Lower lobe of right lung (tissue), 2 donors: ENCODE measurements at regions of chr6 and their contacts with region 1.

Region 1: GRCh38 chr6:165732696-165733488 is 69.9 kb upstream of the PDE10A start:
- DNase-seq: no peak
- ATAC-seq: no peak
- H3K4me3 ChIP-seq: no peak overlapping the region
- H3K27ac ChIP-seq: no peak overlapping the region
- H3K4me1 ChIP-seq: no peaks in the 10 kb centered on the region
- H3K27me3 ChIP-seq: no peaks in the 10 kb centered on the region
- CTCF ChIP-seq: no peak

Region 2: DNA sequence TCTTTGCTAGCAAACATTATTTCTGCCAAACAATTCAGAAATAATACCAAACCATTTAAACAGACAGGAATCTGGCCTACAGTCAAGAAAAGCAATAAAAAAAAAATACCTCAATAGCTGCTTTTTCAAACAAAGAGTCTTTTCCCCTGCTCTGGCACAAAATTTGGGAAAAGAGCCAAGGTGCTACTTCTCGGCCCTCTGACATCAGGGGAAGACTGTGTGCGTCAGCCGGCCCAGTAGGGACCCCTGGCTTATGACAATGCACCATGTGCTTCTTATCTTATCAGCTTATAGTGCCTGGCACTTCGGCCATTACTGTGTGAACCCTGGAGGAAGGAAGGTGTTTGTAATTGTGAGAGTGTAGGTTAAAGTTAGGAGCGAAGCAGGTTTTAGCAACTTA is 159.2 kb before region 1 on chr6:
- intact Hi-C with region 1: no loop called
- DNase-seq: no peak
- ATAC-seq: peak; percentile 63 to 83
- H3K4me3 ChIP-seq: no peak overlapping the region
- H3K27ac ChIP-seq: no peak overlapping the region
- H3K4me1 ChIP-seq: no peaks in the 10 kb centered on the region
- H3K27me3 ChIP-seq: no peaks in the 10 kb centered on the region
- CTCF ChIP-seq: no peak

Region 3: GRCh38 chr6:165849534-165850430 is 116.9 kb after region 1 on chr6:
- intact Hi-C with region 1: loop called (anchors 10 kb)
- DNase-seq: no peak
- ATAC-seq: peak in 1 of 2 donors; percentile 63
- H3K4me3 ChIP-seq: no peak overlapping the region
- H3K27ac ChIP-seq: no peak overlapping the region
- H3K4me1 ChIP-seq: peaks cover 5% of the 10 kb centered on the region
- H3K27me3 ChIP-seq: peaks cover 50% of the 10 kb centered on the region
- CTCF ChIP-seq: no peak

Region 4: DNA sequence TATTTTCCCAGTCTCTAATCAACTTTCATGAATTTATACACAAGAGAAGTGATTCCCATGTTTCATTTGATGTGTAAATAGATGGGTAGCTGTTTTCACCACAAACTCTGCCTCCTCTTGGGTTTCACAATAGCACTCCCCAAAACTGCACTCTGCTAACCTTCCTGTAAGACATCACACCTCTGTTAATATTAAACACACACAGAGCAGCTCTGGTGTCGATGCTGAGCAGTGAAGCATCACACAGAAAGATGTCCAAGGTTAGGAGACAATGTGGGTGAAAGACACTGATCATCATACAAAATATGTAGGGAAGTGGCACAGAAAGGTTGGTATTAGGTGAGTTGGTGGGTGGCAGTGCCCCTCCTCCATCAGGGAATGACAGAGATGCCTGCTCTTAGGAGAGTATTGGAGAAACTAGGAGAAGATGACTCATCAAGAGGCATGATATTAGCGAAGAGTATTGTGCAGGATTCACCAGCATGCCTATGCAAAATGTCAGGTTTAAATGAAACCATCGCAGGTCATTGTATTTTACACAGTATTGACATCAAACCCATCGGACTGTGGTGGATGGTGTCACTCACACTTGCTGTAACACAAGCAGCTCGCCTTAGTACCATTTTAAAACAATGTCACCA is 235.0 kb after region 1 on chr6:
- intact Hi-C with region 1: no loop called
- DNase-seq: no peak
- ATAC-seq: no peak
- H3K4me3 ChIP-seq: no peak overlapping the region
- H3K27ac ChIP-seq: no peak overlapping the region
- H3K4me1 ChIP-seq: no peaks in the 10 kb centered on the region
- H3K27me3 ChIP-seq: no peaks in the 10 kb centered on the region
- CTCF ChIP-seq: no peak